ENCODE measurements at regions of chr2 and their contacts with region 1.

Region 1: GRCh38 chr2:158130832-158131473 is 29.3 kb downstream of the UPP2 start:
- DNase-seq: peak; percentile 96
- ATAC-seq: peak; percentile 56
- H3K4me3 ChIP-seq: peak overlapping the region in 2 of 3 experiments; percentile 35 to 56; a peak in 5 of 6 replicates
- H3K27ac ChIP-seq: peak overlapping the region; percentile 98
- H3K4me1 ChIP-seq: peaks cover 98% of the 10 kb centered on the region
- H3K27me3 ChIP-seq: no peaks in the 10 kb centered on the region
- CTCF ChIP-seq: no peak
- EP300 ChIP-seq: peak; percentile 20 to 100; a peak in 3 of 4 replicates
- POLR2A ChIP-seq: no peak; a peak in 1 of 4 replicates
- RAD21 ChIP-seq: no peak; the same call in 1 of the 2 replicates

Region 2: DNA sequence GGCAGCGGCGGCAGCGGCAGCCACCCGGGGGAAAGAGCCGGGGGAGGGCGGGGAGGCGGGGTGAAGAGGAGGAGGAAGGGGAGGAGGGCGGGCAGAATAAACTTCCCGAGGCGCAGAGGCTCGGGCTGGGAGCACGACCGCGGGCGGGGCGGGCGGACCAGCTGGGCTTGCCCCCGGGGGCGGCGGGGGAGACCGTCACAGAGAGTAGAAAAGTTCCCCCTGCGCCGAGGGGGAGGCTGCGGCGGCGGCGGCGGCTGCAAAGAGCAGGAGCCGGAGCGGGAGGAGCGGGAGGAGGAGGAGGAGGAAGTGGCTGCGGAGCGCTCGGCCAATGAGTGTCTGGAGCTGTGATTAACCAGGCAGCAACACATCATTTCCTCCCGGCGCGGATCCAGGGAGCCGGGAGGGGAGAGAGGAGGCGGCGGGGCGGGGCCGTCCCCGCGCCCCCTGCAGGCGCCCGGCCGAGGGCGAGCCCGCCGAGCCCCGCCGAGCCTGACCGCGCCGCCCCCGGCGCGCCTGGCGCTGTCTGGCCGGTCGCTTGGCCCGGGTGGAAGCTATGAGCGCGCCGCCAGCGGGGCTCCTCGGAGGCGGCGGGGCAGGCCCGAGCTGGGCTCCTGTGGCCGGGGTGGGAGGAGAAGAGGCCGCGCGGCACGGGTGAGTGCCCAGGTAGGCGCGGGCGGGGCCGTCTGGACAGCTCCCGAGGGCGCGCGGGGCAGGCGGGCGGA is 254.7 kb before region 1 on chr2 and contains the start of gene ACVR1:
- CTCF ChIA-PET with region 1: no interaction called
- POLR2A ChIA-PET with region 1: no interaction called
- in situ Hi-C with region 1: no loop called
- intact Hi-C with region 1: loop called (anchors 2 kb)
- DNase-seq: peak; percentile 95
- ATAC-seq: peak; percentile 91
- H3K4me3 ChIP-seq: peak within 1 kb of the TSS; percentile 86 to 98 (median 94)
- H3K27ac ChIP-seq: peak within 1 kb of the TSS; percentile 61
- H3K4me1 ChIP-seq: peaks cover 46% of the 10 kb centered on the region
- H3K27me3 ChIP-seq: peaks cover 0 to 13% of the 10 kb centered on the region in 2 experiments; a peak in 1 of 5 replicates
- CTCF ChIP-seq: peak; percentile 44
- EP300 ChIP-seq: peak in 1 of 2 experiments; percentile 37; a peak in 2 of 4 replicates
- POLR2A ChIP-seq: peak in 1 of 2 experiments; percentile 59; a peak in 1 of 4 replicates
- RAD21 ChIP-seq: peak; percentile 84; the same call in 1 of the 2 replicates
- total RNA-seq, gene ACVR1: 2.3 and 2.8 TPM in 2 replicates

Region 3: GRCh38 chr2:158094487-158095092 is 36.4 kb before region 1 on chr2:
- CTCF ChIA-PET with region 1: no interaction called
- POLR2A ChIA-PET with region 1: interaction called, 15 read pairs
- in situ Hi-C with region 1: no loop called
- intact Hi-C with region 1: loop called (anchors 2 kb)
- DNase-seq: peak; percentile 71
- ATAC-seq: peak; percentile 86
- H3K4me3 ChIP-seq: peak overlapping the region in 2 of 3 experiments; percentile 17 to 41; a peak in 2 of 6 replicates
- H3K27ac ChIP-seq: peak overlapping the region; percentile 61
- H3K4me1 ChIP-seq: peaks cover 50% of the 10 kb centered on the region
- H3K27me3 ChIP-seq: no peaks in the 10 kb centered on the region
- CTCF ChIP-seq: 0 out of 2 replicates have a peak, but pooled peaks have one; percentile 3
- EP300 ChIP-seq: peak in 1 of 2 experiments; percentile 16; a peak in 1 of 4 replicates
- POLR2A ChIP-seq: no peak
- RAD21 ChIP-seq: no peak

Region 4: GRCh38 chr2:158142568-158143332 is 11.8 kb after region 1 on chr2:
- CTCF ChIA-PET with region 1: no interaction called
- POLR2A ChIA-PET with region 1: interaction called, 19 read pairs
- in situ Hi-C with region 1: no loop called
- intact Hi-C with region 1: no loop called
- DNase-seq: no peak
- ATAC-seq: no peak
- H3K4me3 ChIP-seq: no peak overlapping the region
- H3K27ac ChIP-seq: no peak overlapping the region
- H3K4me1 ChIP-seq: peaks cover 22% of the 10 kb centered on the region
- H3K27me3 ChIP-seq: no peaks in the 10 kb centered on the region
- CTCF ChIP-seq: no peak
- EP300 ChIP-seq: no peak
- POLR2A ChIP-seq: no peak
- RAD21 ChIP-seq: no peak

Region 5: DNA sequence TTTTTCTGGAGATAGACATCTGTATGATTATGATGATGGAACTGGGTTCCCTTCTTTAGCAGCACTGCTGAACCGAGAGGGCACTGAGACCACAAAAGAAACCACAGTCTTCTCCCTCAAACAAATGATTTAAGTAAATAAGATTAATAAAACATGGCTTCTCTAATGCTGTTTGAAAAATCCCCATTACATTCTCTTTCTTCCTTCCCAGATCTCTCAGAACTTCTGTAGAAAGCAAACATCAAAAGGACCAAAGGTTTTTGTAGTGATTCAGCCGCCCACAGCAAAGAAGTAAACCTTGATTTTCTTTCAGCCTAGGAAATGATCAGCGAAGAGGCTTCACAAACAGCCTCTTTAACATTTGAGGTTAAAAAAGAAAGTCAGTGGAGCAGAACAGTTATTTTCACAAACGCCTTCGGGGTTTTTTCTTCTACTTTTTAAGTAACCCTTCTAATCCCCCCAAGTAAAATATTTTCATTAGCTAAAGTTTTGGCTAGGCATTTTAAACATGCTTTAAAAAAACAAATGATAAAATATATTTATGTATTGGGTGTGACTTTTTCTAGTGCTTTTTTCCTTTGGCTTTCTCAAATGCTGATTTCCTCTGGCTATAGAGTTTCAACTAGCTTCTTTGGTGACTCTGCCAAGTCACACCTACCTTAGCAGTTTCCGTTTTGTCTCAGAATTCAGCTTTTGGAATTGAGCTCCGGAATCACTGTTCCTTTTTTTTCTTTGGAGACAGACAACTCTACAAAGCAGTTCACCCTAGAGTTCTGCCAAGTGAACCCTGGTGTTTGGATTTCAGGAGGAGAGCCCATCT is 60.3 kb after region 1 on chr2:
- CTCF ChIA-PET with region 1: no interaction called
- POLR2A ChIA-PET with region 1: interaction called, 26 read pairs
- in situ Hi-C with region 1: no loop called
- intact Hi-C with region 1: loop called (anchors 1 kb)
- DNase-seq: peak; percentile 95
- ATAC-seq: peak; percentile 76
- H3K4me3 ChIP-seq: peak overlapping the region; percentile 13 to 34 (median 19); a peak in 5 of 6 replicates
- H3K27ac ChIP-seq: peak overlapping the region; percentile 82
- H3K4me1 ChIP-seq: peaks cover 70% of the 10 kb centered on the region
- H3K27me3 ChIP-seq: no peaks in the 10 kb centered on the region
- CTCF ChIP-seq: no peak
- EP300 ChIP-seq: peak in 1 of 2 experiments; percentile 98; a peak in 2 of 4 replicates
- POLR2A ChIP-seq: no peak
- RAD21 ChIP-seq: no peak

Region 6: GRCh38 chr2:158205215-158205614 is 74.3 kb after region 1 on chr2:
- CTCF ChIA-PET with region 1: no interaction called
- POLR2A ChIA-PET with region 1: no interaction called
- in situ Hi-C with region 1: no loop called
- intact Hi-C with region 1: no loop called
- DNase-seq: no peak
- ATAC-seq: no peak
- H3K4me3 ChIP-seq: no peak overlapping the region
- H3K27ac ChIP-seq: no peak overlapping the region
- H3K4me1 ChIP-seq: peaks cover 54% of the 10 kb centered on the region
- H3K27me3 ChIP-seq: no peaks in the 10 kb centered on the region; a peak in 1 of 5 replicates
- CTCF ChIP-seq: no peak
- EP300 ChIP-seq: no peak
- POLR2A ChIP-seq: no peak
- RAD21 ChIP-seq: no peak